ENCODE measurements at regions of chr10 and their contacts with region 1.

Region 1: GRCh38 chr10:88386821-88387773 is 196.0 kb downstream of the RNLS start:
- DNase-seq: no peak
- ATAC-seq: peak; percentile 36
- H3K4me3 Mint-ChIP-seq: no peak overlapping the region
- H3K27ac Mint-ChIP-seq: no peak overlapping the region
- H3K4me1 Mint-ChIP-seq: peaks cover 16% of the 10 kb centered on the region
- H3K27me3 Mint-ChIP-seq: no peaks in the 10 kb centered on the region

Region 2: DNA sequence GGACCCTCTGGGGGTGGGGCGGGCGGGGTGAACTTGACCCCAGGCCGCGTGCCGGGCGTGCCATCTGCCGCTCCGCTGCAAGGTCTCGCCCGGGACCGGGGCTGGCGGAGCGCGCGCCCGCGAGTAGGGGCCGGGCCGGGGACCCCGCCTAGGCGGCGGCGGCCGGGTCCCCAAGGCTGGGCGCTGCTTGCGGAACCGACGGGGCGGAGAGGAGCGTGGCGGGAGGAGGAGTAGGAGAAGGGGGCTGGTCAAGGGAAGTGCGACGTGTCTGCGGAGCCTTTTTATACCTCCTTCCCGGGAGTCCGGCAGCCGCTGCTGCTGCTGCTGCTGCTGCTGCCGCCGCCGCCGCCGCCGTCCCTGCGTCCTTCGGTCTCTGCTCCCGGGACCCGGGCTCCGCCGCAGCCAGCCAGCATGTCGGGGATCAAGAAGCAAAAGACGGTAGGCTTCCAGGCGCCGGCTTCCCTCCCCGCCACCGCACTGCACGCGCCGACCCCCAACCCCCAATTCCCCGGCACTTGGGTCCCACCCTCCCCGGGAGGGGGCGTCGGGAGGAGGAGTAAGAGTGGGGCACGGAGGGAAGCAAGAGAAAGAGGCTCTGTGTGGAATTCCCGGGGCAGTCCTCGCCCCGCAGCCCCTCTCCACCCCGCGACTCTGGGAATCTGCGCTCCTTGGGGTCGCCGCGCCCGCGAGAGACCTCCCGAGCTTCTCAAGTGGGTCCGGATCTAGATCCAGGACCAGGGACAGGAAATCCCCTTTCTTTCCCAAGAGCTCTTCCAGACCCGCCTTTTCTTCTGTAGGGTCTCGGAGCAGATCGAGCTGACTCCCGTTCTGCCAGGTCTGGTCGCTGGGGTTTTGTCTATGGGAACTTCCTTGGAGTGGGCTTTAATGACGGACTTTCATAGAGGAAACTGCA is 727.3 kb before region 1 on chr10 and contains the start of gene PAPSS2:
- CTCF ChIA-PET with region 1: no interaction called
- POLR2A ChIA-PET with region 1: no interaction called
- intact Hi-C with region 1: loop called in 1 of 2 experiments (anchors 10 kb)
- DNase-seq: peak; percentile 56
- ATAC-seq: peak; percentile 24
- H3K4me3 Mint-ChIP-seq: peak within 1 kb of the TSS; percentile 65
- H3K27ac Mint-ChIP-seq: no peak within 1 kb of the TSS
- H3K4me1 Mint-ChIP-seq: peaks cover 8% of the 10 kb centered on the region
- H3K27me3 Mint-ChIP-seq: peaks cover 38% of the 10 kb centered on the region
- total RNA-seq, gene PAPSS2: 0.05 to 0.30 TPM

Region 3: GRCh38 chr10:87850742-87851205 is 536.3 kb before region 1 on chr10:
- CTCF ChIA-PET with region 1: interaction called, 19 read pairs
- POLR2A ChIA-PET with region 1: no interaction called
- intact Hi-C with region 1: no loop called
- DNase-seq: peak; percentile 64
- ATAC-seq: peak; percentile 91
- H3K4me3 Mint-ChIP-seq: no peak overlapping the region
- H3K27ac Mint-ChIP-seq: no peak overlapping the region
- H3K4me1 Mint-ChIP-seq: peaks cover 14% of the 10 kb centered on the region
- H3K27me3 Mint-ChIP-seq: peaks cover 2% of the 10 kb centered on the region

Region 4: GRCh38 chr10:88114368-88114767 is 272.7 kb before region 1 on chr10:
- CTCF ChIA-PET with region 1: interaction called, 4 read pairs
- POLR2A ChIA-PET with region 1: interaction called, 3 read pairs
- intact Hi-C with region 1: loop called in 1 of 2 experiments (anchors 5 kb)
- DNase-seq: peak; percentile 47
- ATAC-seq: no peak
- H3K4me3 Mint-ChIP-seq: no peak overlapping the region
- H3K27ac Mint-ChIP-seq: no peak overlapping the region
- H3K4me1 Mint-ChIP-seq: peaks cover 9% of the 10 kb centered on the region
- H3K27me3 Mint-ChIP-seq: peaks cover 15% of the 10 kb centered on the region

Region 5: GRCh38 chr10:88254091-88254490 is 133.0 kb before region 1 on chr10:
- CTCF ChIA-PET with region 1: no interaction called
- POLR2A ChIA-PET with region 1: no interaction called
- intact Hi-C with region 1: no loop called
- DNase-seq: peak; percentile 17
- ATAC-seq: peak; percentile 87
- H3K4me3 Mint-ChIP-seq: no peak overlapping the region
- H3K27ac Mint-ChIP-seq: no peak overlapping the region
- H3K4me1 Mint-ChIP-seq: peaks cover 4% of the 10 kb centered on the region
- H3K27me3 Mint-ChIP-seq: no peaks in the 10 kb centered on the region

Region 6: DNA sequence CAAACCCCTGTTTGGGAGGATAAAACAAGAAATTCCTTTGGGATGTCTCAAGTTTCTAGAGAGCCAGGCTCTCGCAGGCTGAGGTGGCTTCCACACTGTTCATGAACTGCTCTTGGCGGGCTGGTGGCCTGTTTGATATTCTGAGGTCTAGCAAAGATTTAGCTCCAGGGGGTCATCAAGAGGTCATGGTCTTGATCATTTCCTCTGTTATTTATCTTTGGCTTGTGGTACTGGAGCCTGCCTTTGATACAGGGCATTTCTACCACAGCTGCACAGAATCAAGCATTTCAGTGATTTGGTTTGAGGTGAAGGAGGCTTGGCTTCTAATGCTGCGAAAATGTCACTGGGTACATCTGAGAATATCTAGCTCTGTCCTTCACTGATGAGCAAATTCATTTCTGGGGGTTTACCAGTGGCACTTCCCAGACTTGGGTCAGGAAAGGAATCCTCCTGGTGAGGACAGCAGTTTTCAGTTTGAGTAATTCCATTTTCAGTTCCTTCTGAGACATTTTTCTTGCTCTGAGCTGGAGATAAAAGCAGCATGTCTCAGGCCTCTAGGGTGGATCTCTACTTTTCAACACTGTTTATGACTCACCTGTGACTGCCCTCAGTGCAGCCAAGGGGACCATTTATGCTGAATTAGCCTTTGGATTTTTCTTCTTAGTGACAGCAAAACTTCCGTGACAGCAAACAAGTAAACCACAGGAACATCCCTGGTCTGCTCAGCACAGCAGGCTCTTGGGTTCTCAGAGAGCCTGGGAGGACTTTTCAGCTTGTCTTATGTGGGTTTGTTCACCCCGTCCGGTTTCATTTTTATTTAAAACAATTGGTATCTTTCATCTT is 116.0 kb before region 1 on chr10:
- CTCF ChIA-PET with region 1: interaction called, 3 read pairs
- POLR2A ChIA-PET with region 1: no interaction called
- intact Hi-C with region 1: loop called in 1 of 2 experiments (anchors 5 kb)
- DNase-seq: peak; percentile 65
- ATAC-seq: peak; percentile 93
- H3K4me3 Mint-ChIP-seq: no peak overlapping the region
- H3K27ac Mint-ChIP-seq: peak overlapping the region; percentile 64
- H3K4me1 Mint-ChIP-seq: peaks cover 37% of the 10 kb centered on the region
- H3K27me3 Mint-ChIP-seq: peaks cover 3% of the 10 kb centered on the region

Region 7: GRCh38 chr10:88361494-88361893 is 25.6 kb before region 1 on chr10:
- CTCF ChIA-PET with region 1: no interaction called
- POLR2A ChIA-PET with region 1: no interaction called
- intact Hi-C with region 1: no loop called
- DNase-seq: no peak
- ATAC-seq: no peak
- H3K4me3 Mint-ChIP-seq: no peak overlapping the region
- H3K27ac Mint-ChIP-seq: no peak overlapping the region
- H3K4me1 Mint-ChIP-seq: no peaks in the 10 kb centered on the region
- H3K27me3 Mint-ChIP-seq: no peaks in the 10 kb centered on the region

Region 8: DNA sequence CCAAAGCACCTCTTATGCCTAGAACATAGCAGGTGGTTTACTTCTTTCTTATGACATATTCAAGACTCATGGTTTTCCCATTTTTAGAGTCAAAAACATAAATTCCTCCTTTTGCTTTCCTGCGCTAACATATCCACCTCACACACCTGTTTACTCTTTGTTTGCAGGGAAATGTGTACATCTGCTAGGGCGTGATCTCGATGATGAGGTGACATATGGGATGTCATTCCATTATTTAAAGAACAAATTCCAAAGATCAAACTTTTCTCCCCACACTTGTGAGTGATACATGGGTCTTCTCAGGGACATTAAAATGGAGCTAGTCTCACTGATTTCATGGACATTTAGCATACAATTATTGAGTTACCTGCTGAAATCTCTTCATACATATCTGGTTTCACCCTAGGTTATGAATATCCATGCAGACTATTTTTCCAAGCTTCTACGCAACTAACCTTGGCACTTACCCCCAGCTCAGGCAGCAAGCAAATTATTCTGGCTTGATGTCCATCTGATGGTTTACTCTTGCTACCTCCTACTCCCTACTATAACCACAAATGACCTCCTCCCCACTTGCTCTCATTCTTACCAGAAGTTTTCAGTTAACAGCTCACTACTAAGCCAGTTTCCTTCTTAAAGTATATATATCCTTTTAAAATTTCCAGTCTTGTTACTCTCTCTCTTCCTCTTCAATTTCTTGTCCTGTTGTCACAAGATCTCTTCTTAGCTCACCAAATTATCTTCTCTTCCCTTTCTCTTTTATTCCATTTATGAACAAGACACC is 12.5 kb before region 1 on chr10:
- CTCF ChIA-PET with region 1: interaction called, 11 read pairs
- POLR2A ChIA-PET with region 1: interaction called, 3 read pairs
- intact Hi-C with region 1: no loop called
- DNase-seq: no peak
- ATAC-seq: no peak
- H3K4me3 Mint-ChIP-seq: no peak overlapping the region
- H3K27ac Mint-ChIP-seq: no peak overlapping the region
- H3K4me1 Mint-ChIP-seq: peaks cover 6% of the 10 kb centered on the region
- H3K27me3 Mint-ChIP-seq: no peaks in the 10 kb centered on the region

Measured in activated CD4-positive, alpha-beta T cell treated with anti-CD3 and anti-CD28 coated beads for 36 hours (primary cell).